T-cell (primary cell): ENCODE measurements at regions of chr21 and their contacts with region 1.

Region 1: DNA sequence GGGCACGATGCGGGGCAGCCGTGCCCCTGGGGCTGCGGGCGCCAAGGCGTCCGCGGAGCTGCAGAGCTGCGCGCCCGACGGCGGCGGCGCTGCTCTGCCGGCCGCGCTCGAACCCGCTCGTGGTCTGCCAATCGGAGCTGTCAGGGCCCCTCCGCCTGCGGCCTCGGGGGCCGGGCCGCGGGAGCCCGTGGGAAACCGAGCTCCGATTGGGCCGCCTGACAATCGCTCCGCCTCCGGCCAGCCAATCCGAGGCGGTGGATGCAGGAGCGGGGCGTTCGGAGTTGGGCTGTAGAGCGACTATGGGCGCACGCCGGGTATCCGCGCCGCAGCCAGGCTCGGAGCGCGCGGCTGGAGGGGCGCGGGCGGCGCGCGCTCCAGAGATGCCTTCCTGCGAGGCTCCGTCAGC is 100.5 kb upstream of the SOD1 start:
- DNase-seq: peak; percentile 76 to 92 (median 86)
- ATAC-seq: peak; percentile 87 to 88 (median 88)
- H3K4me3 ChIP-seq: peak overlapping the region; percentile 60 to 64
- H3K4me3 Mint-ChIP-seq: peak overlapping the region; percentile 81 to 92 (median 83)
- H3K27ac ChIP-seq: no peak overlapping the region
- H3K27ac Mint-ChIP-seq: no peak overlapping the region
- H3K4me1 ChIP-seq: peaks cover 4 to 34% of the 10 kb centered on the region in 2 experiments
- H3K4me1 Mint-ChIP-seq: peaks cover 23 to 42% (median 38%) of the 10 kb centered on the region in 3 donors
- H3K27me3 ChIP-seq: peaks cover 2 to 30% of the 10 kb centered on the region in 2 experiments
- H3K27me3 Mint-ChIP-seq: peaks cover 6 to 23% of the 10 kb centered on the region in 2 donors

Region 2: DNA sequence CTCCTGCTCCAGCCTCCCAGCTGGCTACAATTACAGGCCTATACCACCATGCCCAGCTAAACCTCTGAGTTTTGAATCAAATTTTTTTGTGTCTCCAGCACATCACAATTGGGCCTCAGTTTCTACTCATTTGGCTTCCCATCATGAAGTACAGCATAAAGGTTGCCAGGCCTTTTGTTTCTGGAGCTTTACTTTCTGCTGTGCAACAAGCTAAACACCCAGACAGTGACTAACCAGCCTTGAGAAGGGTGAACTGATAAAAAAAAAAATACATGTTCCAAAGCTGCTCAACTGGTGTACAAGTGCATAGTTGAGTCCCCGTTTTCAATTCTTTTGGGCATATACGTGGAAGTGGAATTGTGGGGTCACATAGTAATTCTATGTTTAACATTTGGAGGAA is 240.0 kb before region 1 on chr21:
- CTCF ChIA-PET with region 1: no interaction called
- POLR2A ChIA-PET with region 1: no interaction called
- DNase-seq: no peak
- ATAC-seq: no peak
- H3K4me3 ChIP-seq: no peak overlapping the region
- H3K4me3 Mint-ChIP-seq: no peak overlapping the region
- H3K27ac ChIP-seq: no peak overlapping the region
- H3K27ac Mint-ChIP-seq: peak overlapping the region in 1 of 2 donors; percentile 8
- H3K4me1 ChIP-seq: peaks cover 0 to 2% of the 10 kb centered on the region in 2 experiments
- H3K4me1 Mint-ChIP-seq: peaks cover 0 to 12% (median 11%) of the 10 kb centered on the region in 3 donors
- H3K27me3 ChIP-seq: no peaks in the 10 kb centered on the region
- H3K27me3 Mint-ChIP-seq: no peaks in the 10 kb centered on the region

Region 3: GRCh38 chr21:31443736-31444521 is 115.0 kb before region 1 on chr21:
- CTCF ChIA-PET with region 1: no interaction called
- POLR2A ChIA-PET with region 1: interaction called in 1 of 2 experiments, 10 read pairs
- DNase-seq: peak in 2 of 35 experiments; percentile 17 to 18
- ATAC-seq: no peak
- H3K4me3 ChIP-seq: no peak overlapping the region
- H3K4me3 Mint-ChIP-seq: peak overlapping the region in 1 of 3 donors; percentile 14
- H3K27ac ChIP-seq: no peak overlapping the region
- H3K27ac Mint-ChIP-seq: peak overlapping the region; percentile 41 to 46
- H3K4me1 ChIP-seq: peaks cover 25 to 31% of the 10 kb centered on the region in 2 experiments
- H3K4me1 Mint-ChIP-seq: peaks cover 45 to 52% (median 52%) of the 10 kb centered on the region in 3 donors
- H3K27me3 ChIP-seq: no peaks in the 10 kb centered on the region
- H3K27me3 Mint-ChIP-seq: no peaks in the 10 kb centered on the region

Region 4: GRCh38 chr21:31659536-31660258 is 100.7 kb after region 1 on chr21 and contains the start of gene SOD1:
- CTCF ChIA-PET with region 1: interaction called in 1 of 2 experiments, 3 read pairs
- POLR2A ChIA-PET with region 1: interaction called in 1 of 2 experiments, 10 read pairs
- DNase-seq: peak; percentile 92 to 98 (median 95)
- ATAC-seq: peak; percentile 93 to 95 (median 94)
- H3K4me3 ChIP-seq: peak within 1 kb of the TSS; percentile 62 to 73
- H3K4me3 Mint-ChIP-seq: peak within 1 kb of the TSS; percentile 86 to 100 (median 99)
- H3K27ac ChIP-seq: peak within 1 kb of the TSS; percentile 72
- H3K27ac Mint-ChIP-seq: peak within 1 kb of the TSS; percentile 99 to 100
- H3K4me1 ChIP-seq: peaks cover 14 to 43% of the 10 kb centered on the region in 2 experiments
- H3K4me1 Mint-ChIP-seq: peaks cover 56 to 75% (median 73%) of the 10 kb centered on the region in 3 donors
- H3K27me3 ChIP-seq: no peaks in the 10 kb centered on the region
- H3K27me3 Mint-ChIP-seq: no peaks in the 10 kb centered on the region
- total RNA-seq, gene SOD1: 143 to 167 (median 152) TPM

Region 5: DNA sequence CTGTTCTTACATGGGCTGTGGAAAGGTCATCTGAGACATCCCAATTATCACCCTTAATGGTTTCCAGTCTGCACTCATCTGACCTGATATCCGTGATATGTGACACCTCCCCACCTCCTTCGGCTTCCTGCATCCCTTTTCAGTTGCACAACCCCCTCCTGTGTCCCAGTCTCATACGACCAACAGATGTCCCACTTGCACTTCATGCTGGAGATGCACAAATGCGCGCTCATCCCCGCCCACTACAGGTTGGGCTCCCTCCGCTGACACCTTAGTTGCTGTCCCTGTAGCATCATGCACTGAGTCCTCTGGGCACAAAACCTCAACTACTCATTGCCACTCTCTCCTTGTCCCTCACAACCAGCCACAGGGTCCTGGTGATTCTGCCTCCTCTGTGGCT is 625.5 kb after region 1 on chr21:
- CTCF ChIA-PET with region 1: no interaction called
- POLR2A ChIA-PET with region 1: no interaction called
- DNase-seq: no peak
- ATAC-seq: no peak
- H3K4me3 ChIP-seq: no peak overlapping the region
- H3K4me3 Mint-ChIP-seq: no peak overlapping the region
- H3K27ac ChIP-seq: no peak overlapping the region
- H3K27ac Mint-ChIP-seq: no peak overlapping the region
- H3K4me1 ChIP-seq: no peaks in the 10 kb centered on the region
- H3K4me1 Mint-ChIP-seq: no peaks in the 10 kb centered on the region
- H3K27me3 ChIP-seq: peaks cover 0 to 4% of the 10 kb centered on the region in 2 experiments
- H3K27me3 Mint-ChIP-seq: peaks cover 6 to 32% of the 10 kb centered on the region in 2 donors